ENCODE measurements at regions of chr1 and their contacts with region 1.

Region 1: DNA sequence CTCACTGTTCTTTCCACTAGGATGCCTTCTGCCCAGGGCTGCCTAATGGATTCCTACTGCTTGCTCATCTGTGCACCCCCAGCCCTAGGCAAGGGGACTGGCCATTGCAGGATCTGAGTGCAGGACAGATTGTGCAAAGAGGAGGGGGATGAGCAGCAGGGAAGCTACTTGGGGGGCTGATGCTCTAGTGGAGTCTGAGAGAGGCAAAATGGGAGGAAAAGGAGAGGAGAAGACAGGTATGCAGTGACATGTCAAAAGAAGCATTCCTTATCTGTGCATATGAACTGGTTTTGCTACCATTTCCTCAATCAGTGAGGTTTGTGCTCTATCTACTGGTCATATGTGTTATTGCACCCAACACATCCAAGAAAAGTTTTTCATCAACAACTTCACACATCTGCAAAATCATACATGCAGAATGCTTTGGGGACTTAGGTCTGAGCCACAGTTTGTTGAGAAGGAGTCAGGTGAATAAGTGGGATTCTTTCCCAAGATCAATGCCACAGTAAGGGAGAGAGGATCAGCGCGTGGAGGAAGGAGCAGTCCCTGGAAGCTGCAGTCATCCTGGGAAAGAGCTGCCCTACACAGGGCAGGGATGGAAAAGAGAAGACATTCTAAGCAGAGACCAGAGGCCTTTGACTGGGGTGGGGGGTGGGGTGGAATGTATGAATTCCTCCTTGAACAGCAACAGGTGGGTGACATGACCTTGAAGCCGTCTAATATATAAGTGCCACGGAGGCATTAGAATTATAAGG is 14.4 kb downstream of the SLC5A9 start:
- DNase-seq: no peak
- ATAC-seq: peak; percentile 39
- H3K4me3 Mint-ChIP-seq: no peak overlapping the region
- H3K27ac Mint-ChIP-seq: no peak overlapping the region
- H3K4me1 Mint-ChIP-seq: no peaks in the 10 kb centered on the region
- H3K27me3 Mint-ChIP-seq: no peaks in the 10 kb centered on the region

Region 2: DNA sequence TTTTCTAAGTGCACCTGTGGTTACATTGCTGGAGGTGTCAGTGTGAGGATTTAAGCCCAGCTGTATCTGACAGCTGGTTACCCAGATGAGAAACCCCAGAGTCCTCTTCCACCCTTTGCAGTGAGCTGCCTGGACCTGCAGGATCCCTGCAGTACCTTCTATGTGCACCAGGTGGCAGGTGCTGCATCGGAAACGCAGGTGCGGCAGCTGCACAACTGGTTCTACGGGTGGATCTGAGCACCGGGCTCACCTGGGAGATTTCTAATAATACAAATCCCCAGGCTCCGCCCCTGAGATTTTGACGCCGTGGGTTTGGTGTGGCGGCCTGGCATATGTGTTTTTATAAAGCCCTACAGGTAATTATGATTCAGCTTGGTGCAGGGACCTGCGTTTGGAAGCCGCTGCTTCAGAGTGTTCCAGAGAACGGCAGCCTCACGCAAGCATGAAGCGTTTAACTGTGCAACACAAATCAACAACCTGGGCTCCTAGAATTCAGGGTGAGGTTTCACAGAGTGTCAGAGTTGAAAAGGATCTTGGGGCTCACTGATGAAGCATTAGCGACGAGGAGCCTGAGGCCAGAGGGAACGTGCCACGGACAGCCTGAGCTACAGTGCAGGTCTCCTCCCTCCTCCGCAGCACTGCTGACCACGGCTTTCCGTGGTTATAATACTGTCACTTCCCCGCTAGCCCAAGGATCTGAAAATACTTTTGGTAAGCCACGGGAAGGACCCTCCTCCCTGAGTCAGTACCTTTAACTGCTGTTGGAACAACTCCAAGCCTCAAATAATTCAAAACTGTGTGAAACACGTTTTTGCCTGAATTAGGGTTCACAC is 143.0 kb before region 1 on chr1:
- CTCF ChIA-PET with region 1: interaction called, 14 read pairs
- DNase-seq: peak; percentile 81
- ATAC-seq: peak; percentile 76
- H3K4me3 Mint-ChIP-seq: no peak overlapping the region
- H3K27ac Mint-ChIP-seq: no peak overlapping the region
- H3K4me1 Mint-ChIP-seq: peaks cover 6% of the 10 kb centered on the region
- H3K27me3 Mint-ChIP-seq: peaks cover 22% of the 10 kb centered on the region